ENCODE measurements at regions of chr9 and their contacts with region 1.

Region 1: GRCh38 chr9:137034863-137035761 is 3.2 kb upstream of the FUT7 start:
- DNase-seq: peak; percentile 93
- H3K4me3 Mint-ChIP-seq: peak overlapping the region; percentile 61
- H3K27ac Mint-ChIP-seq: peak overlapping the region; percentile 89
- H3K4me1 Mint-ChIP-seq: peaks cover 41% of the 10 kb centered on the region
- H3K27me3 Mint-ChIP-seq: no peaks in the 10 kb centered on the region

Region 2: DNA sequence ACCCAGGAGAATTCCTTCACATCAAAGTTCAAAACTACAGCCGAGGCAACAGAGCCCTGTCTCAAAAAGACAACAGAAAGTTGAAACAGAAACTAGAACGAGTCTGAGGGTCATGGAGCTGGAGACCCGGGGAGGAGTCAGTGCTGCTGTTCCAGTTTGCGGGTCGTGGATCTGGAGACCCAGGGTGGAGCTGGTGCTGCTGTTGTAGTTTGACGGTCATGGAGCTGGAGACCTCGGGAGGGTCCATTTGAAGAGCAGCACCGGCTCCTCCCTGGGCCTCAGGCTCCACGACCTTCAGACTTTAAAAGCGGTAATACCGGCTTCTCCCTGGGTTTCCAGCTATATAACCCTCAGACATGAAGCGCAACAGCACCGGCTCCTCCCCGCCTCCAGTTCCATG is 257.8 kb before region 1 on chr9:
- CTCF ChIA-PET with region 1: interaction called, 12 read pairs
- POLR2A ChIA-PET with region 1: no interaction called
- intact Hi-C with region 1: no loop called
- DNase-seq: no peak
- H3K4me3 Mint-ChIP-seq: no peak overlapping the region
- H3K27ac Mint-ChIP-seq: no peak overlapping the region
- H3K4me1 Mint-ChIP-seq: no peaks in the 10 kb centered on the region
- H3K27me3 Mint-ChIP-seq: peaks cover 12% of the 10 kb centered on the region

Region 3: GRCh38 chr9:136849038-136849959 is 185.8 kb before region 1 on chr9 and contains the start of gene PHPT1:
- CTCF ChIA-PET with region 1: interaction called, 22 read pairs
- POLR2A ChIA-PET with region 1: no interaction called
- intact Hi-C with region 1: no loop called
- DNase-seq: peak; percentile 98
- H3K4me3 Mint-ChIP-seq: peak within 1 kb of the TSS; percentile 85
- H3K27ac Mint-ChIP-seq: peak within 1 kb of the TSS; percentile 90
- H3K4me1 Mint-ChIP-seq: peaks cover 19% of the 10 kb centered on the region
- H3K27me3 Mint-ChIP-seq: peaks cover 17% of the 10 kb centered on the region
- total RNA-seq, gene PHPT1: 92.2 to 95.5 TPM

Region 4: DNA sequence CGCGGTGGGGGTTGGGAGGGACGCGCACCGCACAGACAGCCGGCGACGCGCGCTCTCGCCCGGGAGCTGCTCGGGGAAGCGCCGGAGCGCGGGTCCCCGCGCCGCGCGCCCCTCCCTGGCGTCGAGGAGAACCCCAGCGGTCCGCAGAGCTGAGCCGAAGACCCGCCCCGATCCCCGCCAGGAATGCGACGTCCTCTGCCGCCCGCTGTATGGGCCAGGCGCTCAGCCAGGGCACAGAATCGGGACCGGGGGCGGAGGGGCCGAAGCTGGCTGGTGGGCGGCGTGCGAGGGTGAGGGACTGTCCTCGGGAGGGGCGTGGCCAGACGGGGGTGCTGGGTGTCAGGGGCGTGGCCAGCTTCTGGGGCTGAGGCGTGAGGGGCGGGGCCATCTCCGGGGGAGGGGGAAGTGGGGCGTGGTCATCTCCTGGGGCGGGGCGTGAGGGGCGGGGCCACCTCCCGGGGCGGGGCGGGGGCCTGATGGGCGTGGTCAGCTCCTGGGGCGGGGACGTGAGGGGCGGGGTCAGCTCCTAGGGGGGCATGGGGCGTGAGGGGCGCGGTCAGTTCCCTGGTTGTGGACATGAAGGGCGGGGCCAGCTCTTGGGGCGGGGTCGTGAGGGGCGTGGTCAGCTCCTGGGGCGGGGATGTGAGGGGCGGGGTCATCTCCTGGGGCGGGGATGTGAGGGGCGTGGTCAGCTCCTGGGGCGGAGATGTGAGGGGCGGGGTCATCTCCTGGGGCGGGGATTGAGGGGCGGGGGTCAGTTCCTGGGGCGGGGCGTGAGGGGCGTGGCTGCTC is 56.8 kb before region 1 on chr9:
- CTCF ChIA-PET with region 1: interaction called, 31 read pairs
- POLR2A ChIA-PET with region 1: interaction called, 3 read pairs
- intact Hi-C with region 1: no loop called
- DNase-seq: peak; percentile 77
- H3K4me3 Mint-ChIP-seq: no peak overlapping the region
- H3K27ac Mint-ChIP-seq: no peak overlapping the region
- H3K4me1 Mint-ChIP-seq: peaks cover 17% of the 10 kb centered on the region
- H3K27me3 Mint-ChIP-seq: peaks cover 1% of the 10 kb centered on the region

Region 5: DNA sequence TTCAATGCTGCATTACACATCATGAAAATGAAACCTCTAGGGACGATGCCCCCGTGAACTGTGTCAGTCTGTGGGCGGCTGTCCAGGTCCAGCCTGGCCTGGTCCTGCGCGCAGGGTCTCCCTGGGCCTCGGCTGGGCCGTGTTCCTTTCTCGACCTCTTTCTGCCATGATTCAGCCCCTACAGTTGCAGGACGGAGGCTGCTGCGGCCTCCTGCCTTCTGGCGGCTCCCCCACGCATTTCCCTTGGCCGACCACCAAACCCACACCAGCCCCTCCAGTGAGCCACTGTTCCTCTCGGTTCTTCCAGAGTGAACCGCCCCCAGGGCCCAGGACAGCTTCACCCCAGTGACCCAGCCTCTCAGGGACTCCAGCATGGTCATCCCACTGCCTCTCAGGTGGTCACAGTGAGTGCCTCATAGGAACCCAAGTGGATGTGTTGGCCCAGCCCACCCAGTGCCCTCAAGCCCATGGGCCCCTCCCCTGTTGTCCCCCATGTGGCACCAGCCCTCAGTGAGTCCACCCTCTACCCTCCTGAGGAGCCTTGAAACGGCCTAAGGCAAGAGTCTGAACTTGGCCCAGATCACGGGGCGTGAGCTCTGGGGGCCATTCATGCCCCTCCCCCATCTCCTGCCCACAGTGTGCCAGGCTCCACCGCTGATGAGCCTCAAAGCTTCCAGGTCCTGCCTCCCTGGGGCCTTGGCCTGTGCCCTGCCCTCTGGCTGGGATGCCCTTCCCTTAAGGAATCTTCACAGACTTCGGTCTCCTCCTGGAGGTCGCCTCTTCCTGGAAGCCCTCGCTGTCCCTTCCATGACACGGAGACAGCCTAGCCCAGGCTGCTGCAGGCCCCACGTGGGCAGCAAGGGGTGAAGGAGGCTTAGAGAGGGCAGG is 28.8 kb before region 1 on chr9:
- CTCF ChIA-PET with region 1: interaction called, 29 read pairs
- POLR2A ChIA-PET with region 1: no interaction called
- intact Hi-C with region 1: no loop called
- DNase-seq: no peak
- H3K4me3 Mint-ChIP-seq: no peak overlapping the region
- H3K27ac Mint-ChIP-seq: no peak overlapping the region
- H3K4me1 Mint-ChIP-seq: peaks cover 3% of the 10 kb centered on the region
- H3K27me3 Mint-ChIP-seq: no peaks in the 10 kb centered on the region

Region 6: DNA sequence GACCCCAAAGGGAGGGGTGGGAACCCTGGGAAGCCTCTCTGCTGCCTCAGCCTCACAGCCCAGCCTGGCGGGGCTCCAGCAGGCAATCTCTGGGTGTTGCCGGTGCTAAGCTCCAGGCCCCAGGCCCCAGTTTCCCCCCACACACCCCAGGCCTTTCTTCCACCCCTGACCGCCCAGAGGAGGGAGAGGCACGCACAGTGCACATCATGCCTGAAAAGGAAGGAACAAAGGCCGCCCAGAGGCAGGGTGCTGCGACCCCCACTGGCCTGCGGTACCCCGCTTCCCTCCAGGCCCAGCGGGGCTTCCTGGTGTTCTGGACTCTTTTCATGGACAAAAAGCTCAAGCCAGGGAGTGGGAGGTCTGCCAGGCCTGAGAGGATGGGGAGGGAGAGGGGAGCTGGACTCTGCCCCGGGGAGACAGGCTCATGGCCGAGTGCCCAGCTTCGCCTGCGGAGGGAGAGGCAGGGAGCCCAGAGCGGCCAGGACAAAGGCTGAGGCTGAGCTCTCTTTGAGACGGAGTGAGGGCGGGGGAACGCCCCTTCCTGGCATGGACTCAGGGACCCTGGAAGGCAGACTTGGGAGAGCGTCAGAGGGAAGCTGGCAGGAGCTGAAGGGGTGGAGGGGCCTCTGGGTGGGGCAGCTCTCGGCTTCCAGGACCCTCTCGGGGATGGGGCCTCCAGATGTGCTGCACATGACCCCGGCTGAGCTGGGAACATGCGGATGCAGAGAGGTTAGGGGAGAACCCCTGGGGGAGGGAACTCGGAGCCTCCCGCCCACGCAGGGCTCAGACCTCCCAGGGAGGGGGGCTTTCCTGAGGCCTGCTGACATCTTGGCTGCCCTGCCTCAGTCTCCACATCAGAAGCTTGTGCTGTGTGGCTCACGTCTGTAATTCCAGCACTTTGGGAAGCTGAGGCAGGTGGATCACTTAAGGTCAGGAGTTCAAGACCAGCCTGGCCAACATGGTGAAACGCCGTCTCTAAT is 20.6 kb after region 1 on chr9:
- CTCF ChIA-PET with region 1: interaction called, 10 read pairs
- POLR2A ChIA-PET with region 1: no interaction called
- intact Hi-C with region 1: no loop called
- DNase-seq: no peak
- H3K4me3 Mint-ChIP-seq: no peak overlapping the region
- H3K27ac Mint-ChIP-seq: no peak overlapping the region
- H3K4me1 Mint-ChIP-seq: no peaks in the 10 kb centered on the region
- H3K27me3 Mint-ChIP-seq: peaks cover 11% of the 10 kb centered on the region

Region 7: GRCh38 chr9:137086531-137087408 is 51.7 kb after region 1 on chr9 and contains the start of gene MAN1B1:
- CTCF ChIA-PET with region 1: interaction called, 35 read pairs
- POLR2A ChIA-PET with region 1: interaction called, 3 read pairs
- intact Hi-C with region 1: no loop called
- DNase-seq: peak; percentile 100
- H3K4me3 Mint-ChIP-seq: peak within 1 kb of the TSS; percentile 88
- H3K27ac Mint-ChIP-seq: peak within 1 kb of the TSS; percentile 92
- H3K4me1 Mint-ChIP-seq: peaks cover 40% of the 10 kb centered on the region
- H3K27me3 Mint-ChIP-seq: no peaks in the 10 kb centered on the region
- total RNA-seq, gene MAN1B1: 32.9 to 33.1 TPM